ENCODE measurements at regions of chr15 and their contacts with region 1.

Region 1: DNA sequence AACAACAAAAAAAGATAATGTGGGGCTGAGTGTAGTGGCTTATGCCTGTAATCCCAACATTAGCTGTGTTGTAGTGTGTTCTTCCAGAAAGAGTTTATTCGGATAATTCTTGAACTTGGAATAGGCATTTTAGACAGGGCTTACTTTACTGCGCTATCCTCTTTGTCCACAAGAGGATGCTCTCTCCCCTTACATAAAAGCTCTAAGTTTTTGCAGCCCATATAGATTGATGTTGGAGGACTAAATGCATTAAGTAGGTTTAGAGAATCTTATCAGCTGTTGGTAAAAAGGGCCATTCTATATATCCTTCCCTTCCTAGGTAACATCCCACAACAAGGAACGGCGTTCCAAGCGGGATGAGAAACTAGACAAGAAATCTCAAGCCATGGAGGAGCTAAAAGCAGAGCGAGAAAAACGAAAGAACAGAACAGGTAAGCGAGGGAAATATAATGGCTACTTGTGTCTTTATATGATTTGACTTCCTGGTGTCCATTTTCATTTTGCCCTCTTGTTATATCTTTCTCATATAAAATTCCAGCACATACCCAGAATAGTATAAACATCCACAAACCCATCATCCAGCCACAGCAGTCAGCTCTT is 27.8 kb upstream of the ITPKA start:
- DNase-seq: peak in 6 of 9 donors; percentile 12 to 43 (median 32)
- ATAC-seq: peak; percentile 75
- H3K4me3 ChIP-seq: no peak overlapping the region
- H3K4me3 Mint-ChIP-seq: no peak overlapping the region
- H3K27ac ChIP-seq: no peak overlapping the region
- H3K27ac Mint-ChIP-seq: peak overlapping the region in 2 of 9 donors; percentile 16 to 63
- H3K4me1 ChIP-seq: no peaks in the 10 kb centered on the region
- H3K4me1 Mint-ChIP-seq: peaks cover 0 to 7% (median 4%) of the 10 kb centered on the region in 7 donors
- H3K27me3 ChIP-seq: no peaks in the 10 kb centered on the region
- H3K27me3 Mint-ChIP-seq: no peaks in the 10 kb centered on the region

Region 2: GRCh38 chr15:41256577-41257038 is 209.3 kb before region 1 on chr15:
- CTCF ChIA-PET with region 1: no interaction called
- POLR2A ChIA-PET with region 1: no interaction called
- intact Hi-C with region 1: no loop called
- DNase-seq: no peak
- ATAC-seq: no peak
- H3K4me3 ChIP-seq: no peak overlapping the region
- H3K4me3 Mint-ChIP-seq: no peak overlapping the region
- H3K27ac ChIP-seq: no peak overlapping the region
- H3K27ac Mint-ChIP-seq: no peak overlapping the region
- H3K4me1 ChIP-seq: no peaks in the 10 kb centered on the region
- H3K4me1 Mint-ChIP-seq: peaks cover 0 to 3% (median 0%) of the 10 kb centered on the region in 7 donors
- H3K27me3 ChIP-seq: no peaks in the 10 kb centered on the region
- H3K27me3 Mint-ChIP-seq: no peaks in the 10 kb centered on the region

Region 3: DNA sequence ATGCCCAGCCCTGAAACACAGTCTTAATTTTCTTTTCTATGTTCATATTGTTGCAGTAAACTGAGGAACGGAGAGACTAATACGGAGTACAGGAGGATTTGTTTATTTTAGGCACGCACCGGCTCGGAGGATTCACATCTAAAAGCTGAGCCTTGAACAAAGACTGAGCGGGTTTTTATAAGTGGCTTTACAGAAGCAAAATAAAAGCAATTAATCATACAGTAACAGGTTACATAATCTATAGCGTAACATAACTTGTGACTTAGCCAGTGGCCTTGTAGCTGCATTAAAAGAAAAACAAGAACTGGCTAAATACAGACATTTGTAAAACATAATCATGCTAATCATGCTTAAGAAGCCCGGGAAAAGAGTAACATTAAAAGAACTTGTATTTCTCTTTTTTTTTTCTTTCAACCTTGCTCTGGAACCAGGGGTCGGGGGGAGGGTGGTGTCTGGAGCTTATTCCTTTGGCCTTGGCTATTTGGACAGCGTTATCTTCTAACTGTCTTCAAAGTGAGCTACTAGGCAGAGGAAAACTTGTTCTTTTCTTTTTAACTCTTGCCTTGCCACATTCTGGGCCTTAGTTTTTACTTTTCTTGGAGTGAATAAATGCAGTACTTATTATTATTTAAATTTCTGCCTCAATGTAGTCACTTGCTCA is 115.7 kb before region 1 on chr15:
- CTCF ChIA-PET with region 1: no interaction called
- POLR2A ChIA-PET with region 1: no interaction called
- intact Hi-C with region 1: no loop called
- DNase-seq: no peak
- ATAC-seq: no peak
- H3K4me3 ChIP-seq: no peak overlapping the region
- H3K4me3 Mint-ChIP-seq: no peak overlapping the region
- H3K27ac ChIP-seq: no peak overlapping the region
- H3K27ac Mint-ChIP-seq: no peak overlapping the region
- H3K4me1 ChIP-seq: no peaks in the 10 kb centered on the region
- H3K4me1 Mint-ChIP-seq: peaks cover 0 to 7% (median 0%) of the 10 kb centered on the region in 7 donors
- H3K27me3 ChIP-seq: no peaks in the 10 kb centered on the region
- H3K27me3 Mint-ChIP-seq: no peaks in the 10 kb centered on the region

Region 4: DNA sequence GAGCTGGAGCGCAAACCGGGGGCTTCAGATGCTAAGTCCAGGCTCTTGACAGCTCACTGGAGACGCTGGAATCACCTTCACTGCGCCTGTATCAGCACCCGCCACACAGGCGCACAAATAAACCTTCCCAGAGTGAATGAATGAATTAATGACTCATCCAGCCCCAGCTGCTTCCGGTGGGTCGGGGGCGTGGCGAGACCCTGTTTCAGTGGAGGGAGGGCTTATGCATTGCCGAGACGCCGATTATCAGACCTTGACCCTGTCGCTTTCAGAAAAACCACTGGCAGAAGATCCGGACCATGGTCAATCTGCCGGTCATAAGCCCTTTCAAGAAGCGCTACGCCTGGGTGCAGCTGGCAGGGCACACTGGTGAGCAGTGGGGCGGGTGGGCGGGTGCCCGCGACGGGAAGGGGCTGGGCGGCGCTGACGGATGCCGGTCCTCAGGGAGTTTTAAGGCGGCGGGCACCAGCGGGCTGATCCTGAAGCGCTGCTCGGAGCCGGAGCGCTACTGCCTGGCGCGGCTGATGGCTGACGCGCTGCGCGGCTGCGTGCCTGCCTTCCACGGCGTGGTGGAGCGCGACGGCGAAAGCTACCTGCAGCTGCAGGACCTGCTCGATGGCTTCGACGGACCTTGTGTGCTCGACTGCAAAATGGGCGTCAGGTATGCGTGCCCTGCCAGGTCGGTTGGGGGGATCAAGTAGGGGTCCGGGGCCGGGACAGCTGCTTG is 35.4 kb after region 1 on chr15:
- CTCF ChIA-PET with region 1: interaction called, 15 read pairs
- POLR2A ChIA-PET with region 1: no interaction called
- intact Hi-C with region 1: loop called in 1 of 2 experiments (anchors 5 kb)
- DNase-seq: peak in 5 of 9 donors; percentile 22 to 38 (median 25)
- ATAC-seq: peak; percentile 60
- H3K4me3 ChIP-seq: peak overlapping the region; percentile 55
- H3K4me3 Mint-ChIP-seq: peak overlapping the region; percentile 29 to 81 (median 77)
- H3K27ac ChIP-seq: no peak overlapping the region
- H3K27ac Mint-ChIP-seq: no peak overlapping the region
- H3K4me1 ChIP-seq: peaks cover 8 to 18% of the 10 kb centered on the region in 2 donors
- H3K4me1 Mint-ChIP-seq: peaks cover 0 to 26% (median 13%) of the 10 kb centered on the region in 7 donors
- H3K27me3 ChIP-seq: peaks cover 3 to 25% of the 10 kb centered on the region in 2 donors
- H3K27me3 Mint-ChIP-seq: peaks cover 46 to 80% (median 48%) of the 10 kb centered on the region in 5 donors

Region 5: GRCh38 chr15:41506796-41507341 is 40.9 kb after region 1 on chr15:
- CTCF ChIA-PET with region 1: interaction called, 15 read pairs
- POLR2A ChIA-PET with region 1: no interaction called
- intact Hi-C with region 1: loop called (anchors 1 to 5 kb)
- DNase-seq: no peak
- ATAC-seq: no peak
- H3K4me3 ChIP-seq: no peak overlapping the region
- H3K4me3 Mint-ChIP-seq: no peak overlapping the region
- H3K27ac ChIP-seq: no peak overlapping the region
- H3K27ac Mint-ChIP-seq: no peak overlapping the region
- H3K4me1 ChIP-seq: peaks cover 3 to 10% of the 10 kb centered on the region in 2 donors
- H3K4me1 Mint-ChIP-seq: peaks cover 0 to 16% (median 10%) of the 10 kb centered on the region in 7 donors
- H3K27me3 ChIP-seq: peaks cover 0 to 3% of the 10 kb centered on the region in 2 donors
- H3K27me3 Mint-ChIP-seq: peaks cover 0 to 62% (median 13%) of the 10 kb centered on the region in 5 donors

Region 6: GRCh38 chr15:41568350-41569017 is 102.6 kb after region 1 on chr15:
- CTCF ChIA-PET with region 1: no interaction called
- POLR2A ChIA-PET with region 1: no interaction called
- intact Hi-C with region 1: no loop called
- DNase-seq: no peak
- ATAC-seq: no peak
- H3K4me3 ChIP-seq: no peak overlapping the region
- H3K4me3 Mint-ChIP-seq: no peak overlapping the region
- H3K27ac ChIP-seq: no peak overlapping the region
- H3K27ac Mint-ChIP-seq: peak overlapping the region in 1 of 9 donors; percentile 74
- H3K4me1 ChIP-seq: no peaks in the 10 kb centered on the region
- H3K4me1 Mint-ChIP-seq: no peaks in the 10 kb centered on the region
- H3K27me3 ChIP-seq: no peaks in the 10 kb centered on the region
- H3K27me3 Mint-ChIP-seq: peaks cover 0 to 6% (median 0%) of the 10 kb centered on the region in 5 donors

Region 7: DNA sequence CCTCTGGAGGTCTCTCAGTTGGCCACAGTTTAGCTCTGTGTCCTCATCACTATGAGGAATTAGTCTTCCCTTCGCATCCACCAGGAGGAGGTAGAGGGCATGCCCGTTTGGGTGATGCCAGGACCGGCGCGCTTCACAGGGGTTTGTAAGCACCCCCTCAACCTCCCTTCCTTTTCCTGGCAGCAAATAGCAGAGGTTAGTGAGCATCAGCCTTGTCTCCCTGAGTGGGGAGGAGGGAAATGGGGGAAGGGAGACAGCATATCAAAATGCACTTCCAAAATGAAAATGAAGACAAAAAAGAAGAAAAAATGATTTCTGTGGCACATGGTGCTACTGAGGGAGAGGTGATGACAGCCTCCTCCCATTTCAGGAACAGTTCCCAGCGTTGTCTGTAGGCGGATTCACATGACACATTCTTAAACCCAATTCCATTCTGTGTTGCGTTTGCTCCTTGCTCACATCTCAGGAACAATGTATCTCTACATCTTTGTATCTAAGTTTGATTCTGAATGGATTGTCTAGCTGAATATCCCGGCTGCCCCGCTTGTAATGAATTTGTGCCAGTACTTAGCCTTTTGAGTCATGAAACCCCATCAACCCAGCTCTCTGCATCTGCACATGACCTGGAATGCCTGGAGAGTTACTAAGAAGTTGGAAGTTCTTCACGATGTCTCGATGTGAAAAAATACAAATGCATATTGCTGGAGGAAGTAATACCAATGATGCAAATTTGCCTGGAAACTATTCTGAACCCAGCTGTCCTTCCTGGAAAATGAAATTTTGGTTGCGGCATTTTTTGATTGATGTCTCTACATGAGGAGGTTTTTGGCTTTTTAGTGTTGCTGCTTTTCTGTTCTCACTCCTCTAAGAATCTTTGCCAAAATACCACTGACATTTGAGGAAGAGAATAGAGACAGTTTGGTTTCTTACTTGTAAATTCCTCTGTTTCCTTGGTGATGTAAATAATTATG is 138.3 kb after region 1 on chr15:
- CTCF ChIA-PET with region 1: interaction called, 3 read pairs
- POLR2A ChIA-PET with region 1: no interaction called
- intact Hi-C with region 1: loop called (anchors 5 to 10 kb)
- DNase-seq: peak; percentile 19 to 62 (median 50)
- ATAC-seq: peak; percentile 93
- H3K4me3 ChIP-seq: no peak overlapping the region
- H3K4me3 Mint-ChIP-seq: peak overlapping the region in 9 of 10 donors; percentile 17 to 81 (median 73)
- H3K27ac ChIP-seq: no peak overlapping the region
- H3K27ac Mint-ChIP-seq: peak overlapping the region in 1 of 9 donors; percentile 74
- H3K4me1 ChIP-seq: peaks cover 0 to 5% of the 10 kb centered on the region in 2 donors
- H3K4me1 Mint-ChIP-seq: peaks cover 3 to 10% (median 7%) of the 10 kb centered on the region in 7 donors
- H3K27me3 ChIP-seq: no peaks in the 10 kb centered on the region
- H3K27me3 Mint-ChIP-seq: peaks cover 0 to 43% (median 9%) of the 10 kb centered on the region in 5 donors

Region 8: DNA sequence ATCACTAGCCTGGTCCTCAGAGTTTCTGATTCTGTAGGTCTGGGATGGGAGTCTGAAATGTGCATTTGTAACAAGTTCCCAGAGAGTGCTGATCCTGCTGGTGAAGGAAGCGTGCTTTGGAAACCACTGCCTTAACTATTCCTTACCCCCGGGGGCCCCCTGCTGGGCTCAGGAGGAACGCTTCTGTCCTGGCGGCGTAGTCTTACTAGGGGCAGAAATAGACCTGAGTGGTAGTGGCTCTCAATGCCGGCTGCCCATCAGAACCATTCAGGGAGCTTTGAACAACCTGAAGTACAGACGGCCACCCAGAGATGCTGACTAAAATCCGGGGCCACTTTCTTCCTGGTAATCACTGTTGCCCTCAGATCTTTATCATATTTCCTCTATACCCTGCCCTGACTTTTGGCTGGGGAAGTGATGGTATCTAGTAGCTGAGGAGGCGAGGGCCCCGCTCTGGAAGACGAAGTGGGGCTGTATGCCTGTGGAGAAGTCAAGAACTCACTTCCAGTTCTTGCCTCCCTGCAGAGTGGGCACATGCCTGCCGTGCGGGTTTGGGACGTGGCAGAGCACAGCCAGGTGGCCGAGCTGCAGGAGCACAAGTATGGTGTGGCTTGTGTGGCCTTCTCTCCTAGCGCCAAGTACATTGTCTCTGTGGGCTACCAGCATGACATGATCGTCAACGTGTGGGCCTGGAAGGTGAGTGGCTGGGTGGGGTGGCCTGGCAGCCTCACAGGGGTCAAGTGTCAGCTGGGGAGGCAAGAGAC is 345.7 kb after region 1 on chr15:
- CTCF ChIA-PET with region 1: interaction called, 4 read pairs
- POLR2A ChIA-PET with region 1: no interaction called
- intact Hi-C with region 1: loop called in 1 of 2 experiments (anchors 1 kb)
- DNase-seq: peak; percentile 58 to 77 (median 72)
- ATAC-seq: peak; percentile 95
- H3K4me3 ChIP-seq: no peak overlapping the region
- H3K4me3 Mint-ChIP-seq: peak overlapping the region in 1 of 10 donors; percentile 30
- H3K27ac ChIP-seq: no peak overlapping the region
- H3K27ac Mint-ChIP-seq: peak overlapping the region in 1 of 9 donors; percentile 58
- H3K4me1 ChIP-seq: peaks cover 0 to 3% of the 10 kb centered on the region in 2 donors
- H3K4me1 Mint-ChIP-seq: peaks cover 8 to 28% (median 12%) of the 10 kb centered on the region in 7 donors
- H3K27me3 ChIP-seq: no peaks in the 10 kb centered on the region
- H3K27me3 Mint-ChIP-seq: no peaks in the 10 kb centered on the region

Region 9: GRCh38 chr15:42056934-42057779 is 591.2 kb after region 1 on chr15:
- CTCF ChIA-PET with region 1: no interaction called
- POLR2A ChIA-PET with region 1: no interaction called
- intact Hi-C with region 1: loop called in 1 of 2 experiments (anchors 10 kb)
- DNase-seq: peak; percentile 19 to 56 (median 30)
- ATAC-seq: peak; percentile 81
- H3K4me3 ChIP-seq: peak overlapping the region; percentile 23
- H3K4me3 Mint-ChIP-seq: peak overlapping the region; percentile 39 to 79 (median 60)
- H3K27ac ChIP-seq: no peak overlapping the region
- H3K27ac Mint-ChIP-seq: peak overlapping the region in 4 of 9 donors; percentile 24 to 77 (median 35)
- H3K4me1 ChIP-seq: no peaks in the 10 kb centered on the region
- H3K4me1 Mint-ChIP-seq: peaks cover 3 to 17% (median 10%) of the 10 kb centered on the region in 7 donors
- H3K27me3 ChIP-seq: peaks cover 0 to 12% of the 10 kb centered on the region in 2 donors
- H3K27me3 Mint-ChIP-seq: peaks cover 11 to 59% (median 27%) of the 10 kb centered on the region in 5 donors

Region 10: GRCh38 chr15:42289166-42289565 is 823.2 kb after region 1 on chr15:
- CTCF ChIA-PET with region 1: interaction called, 10 read pairs
- POLR2A ChIA-PET with region 1: no interaction called
- intact Hi-C with region 1: no loop called
- DNase-seq: no peak
- ATAC-seq: no peak
- H3K4me3 ChIP-seq: no peak overlapping the region
- H3K4me3 Mint-ChIP-seq: no peak overlapping the region
- H3K27ac ChIP-seq: no peak overlapping the region
- H3K27ac Mint-ChIP-seq: no peak overlapping the region
- H3K4me1 ChIP-seq: no peaks in the 10 kb centered on the region
- H3K4me1 Mint-ChIP-seq: peaks cover 0 to 1% (median 0%) of the 10 kb centered on the region in 7 donors
- H3K27me3 ChIP-seq: no peaks in the 10 kb centered on the region
- H3K27me3 Mint-ChIP-seq: no peaks in the 10 kb centered on the region